Vagina (tissue), 2 donors: ENCODE measurements at regions of chr11 and their contacts with region 1.

Region 1: DNA sequence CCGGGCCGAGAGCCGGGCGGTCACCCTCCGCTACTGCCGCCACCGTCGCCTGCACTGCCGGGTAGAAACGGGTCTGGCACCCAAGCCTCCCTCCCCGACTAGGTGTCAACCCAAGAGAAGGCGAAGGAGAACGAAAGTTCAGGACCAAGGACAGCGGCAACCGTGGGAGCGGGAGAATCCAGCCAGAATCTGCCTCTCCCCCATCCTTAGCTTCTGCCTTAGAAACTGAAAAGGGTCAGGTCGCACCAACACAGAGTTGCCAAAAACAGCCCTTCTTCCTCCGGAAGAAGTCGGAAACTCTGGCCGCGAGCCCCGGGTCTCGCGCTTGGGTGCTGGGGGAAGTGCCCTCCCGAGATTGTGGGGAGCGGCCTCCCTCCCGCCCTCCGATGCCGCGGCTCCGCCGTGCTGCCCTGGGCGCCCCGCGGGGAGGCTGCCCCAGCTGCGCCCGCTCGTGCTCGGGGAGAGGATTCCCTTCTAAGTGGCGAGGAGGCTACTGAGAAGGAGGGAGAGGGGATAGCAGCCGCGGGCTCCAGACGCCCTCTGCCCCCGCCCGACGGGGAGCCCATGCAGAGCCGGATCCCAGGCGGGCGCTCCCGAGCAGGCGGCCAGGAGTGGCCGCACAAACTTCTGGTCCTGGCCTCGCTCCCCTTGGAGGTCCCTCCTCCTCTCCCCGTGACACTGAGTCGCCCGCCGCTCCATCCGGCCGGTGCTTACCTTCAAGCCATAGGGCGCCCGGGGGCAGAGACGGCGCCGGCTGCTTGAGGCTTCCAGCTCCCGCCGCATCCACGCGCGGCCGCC is 637 bp downstream of the DRD2 start:
- DNase-seq: peak; percentile 54 to 89
- H3K4me3 ChIP-seq: peak overlapping the region; percentile 12 to 20
- H3K27ac ChIP-seq: no peak overlapping the region
- H3K4me1 ChIP-seq: peaks cover 6% of the 10 kb centered on the region
- H3K27me3 ChIP-seq: peaks cover 4% of the 10 kb centered on the region
- CTCF ChIP-seq: no peak
- POLR2A ChIP-seq: no peak

Region 2: GRCh38 chr11:113923572-113923971 is 449.0 kb after region 1 on chr11:
- intact Hi-C with region 1: loop called (anchors 5 kb)
- DNase-seq: no peak
- H3K4me3 ChIP-seq: no peak overlapping the region
- H3K27ac ChIP-seq: no peak overlapping the region
- H3K4me1 ChIP-seq: no peaks in the 10 kb centered on the region
- H3K27me3 ChIP-seq: no peaks in the 10 kb centered on the region
- CTCF ChIP-seq: no peak
- POLR2A ChIP-seq: no peak